HCT116 (cell line): ENCODE measurements at regions of chr9 and their contacts with region 1.

Region 1: GRCh38 chr9:16191691-16192402 is 639.0 kb downstream of the CCDC171 start:
- DNase-seq: peak; percentile 16
- ATAC-seq: peak; percentile 100
- H3K4me3 ChIP-seq: no peak overlapping the region
- H3K27ac ChIP-seq: no peak overlapping the region
- H3K4me1 ChIP-seq: peaks cover 0 to 5% of the 10 kb centered on the region in 2 experiments; a peak in 1 of 4 replicates
- H3K27me3 ChIP-seq: no peaks in the 10 kb centered on the region
- CTCF ChIP-seq: peak; percentile 20 to 80 (median 71); a peak in 5 of 6 replicates
- POLR2A ChIP-seq: no peak
- RAD21 ChIP-seq: peak; percentile 71

Region 2: DNA sequence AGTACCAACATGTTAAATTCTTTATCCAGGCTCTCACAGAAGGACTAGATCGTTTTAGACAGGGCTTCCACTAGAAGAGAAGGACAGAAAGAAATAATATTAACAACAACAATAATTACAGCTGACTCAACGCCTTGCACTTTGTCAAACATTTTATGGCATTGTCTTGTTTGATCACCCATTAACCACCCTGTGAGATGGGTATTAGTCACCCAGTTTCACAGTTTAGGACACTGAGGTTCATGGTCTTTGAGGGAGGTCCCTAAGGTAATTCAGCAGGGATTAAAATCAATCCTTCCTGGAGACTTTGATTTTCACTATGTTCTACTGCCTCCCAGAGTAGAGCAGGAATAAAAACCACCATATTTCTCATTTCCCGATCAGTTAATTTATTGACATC is 730.0 kb after region 1 on chr9:
- CTCF ChIA-PET with region 1: no interaction called
- POLR2A ChIA-PET with region 1: no interaction called
- RAD21 ChIA-PET with region 1: no interaction called
- intact Hi-C with region 1: loop called (anchors 10 kb)
- DNase-seq: peak; percentile 7
- ATAC-seq: 0 out of 2 replicates have a peak, but pooled peaks have one; percentile 22
- H3K4me3 ChIP-seq: no peak overlapping the region
- H3K27ac ChIP-seq: no peak overlapping the region
- H3K4me1 ChIP-seq: no peaks in the 10 kb centered on the region; a peak in 1 of 4 replicates
- H3K27me3 ChIP-seq: no peaks in the 10 kb centered on the region
- CTCF ChIP-seq: no peak
- POLR2A ChIP-seq: no peak
- RAD21 ChIP-seq: peak; percentile 26; the same call in 1 of the 2 replicates